ENCODE measurements at regions of chr4 and their contacts with region 1.

Region 1: GRCh38 chr4:99117876-99118693 is 26.0 kb downstream of the ADH4 start:
- DNase-seq: no peak
- H3K4me3 ChIP-seq: no peak overlapping the region
- H3K27ac ChIP-seq: no peak overlapping the region
- H3K27me3 ChIP-seq: no peaks in the 10 kb centered on the region
- CTCF ChIP-seq: peak; percentile 45; the same call in 1 of the 2 replicates

Region 2: DNA sequence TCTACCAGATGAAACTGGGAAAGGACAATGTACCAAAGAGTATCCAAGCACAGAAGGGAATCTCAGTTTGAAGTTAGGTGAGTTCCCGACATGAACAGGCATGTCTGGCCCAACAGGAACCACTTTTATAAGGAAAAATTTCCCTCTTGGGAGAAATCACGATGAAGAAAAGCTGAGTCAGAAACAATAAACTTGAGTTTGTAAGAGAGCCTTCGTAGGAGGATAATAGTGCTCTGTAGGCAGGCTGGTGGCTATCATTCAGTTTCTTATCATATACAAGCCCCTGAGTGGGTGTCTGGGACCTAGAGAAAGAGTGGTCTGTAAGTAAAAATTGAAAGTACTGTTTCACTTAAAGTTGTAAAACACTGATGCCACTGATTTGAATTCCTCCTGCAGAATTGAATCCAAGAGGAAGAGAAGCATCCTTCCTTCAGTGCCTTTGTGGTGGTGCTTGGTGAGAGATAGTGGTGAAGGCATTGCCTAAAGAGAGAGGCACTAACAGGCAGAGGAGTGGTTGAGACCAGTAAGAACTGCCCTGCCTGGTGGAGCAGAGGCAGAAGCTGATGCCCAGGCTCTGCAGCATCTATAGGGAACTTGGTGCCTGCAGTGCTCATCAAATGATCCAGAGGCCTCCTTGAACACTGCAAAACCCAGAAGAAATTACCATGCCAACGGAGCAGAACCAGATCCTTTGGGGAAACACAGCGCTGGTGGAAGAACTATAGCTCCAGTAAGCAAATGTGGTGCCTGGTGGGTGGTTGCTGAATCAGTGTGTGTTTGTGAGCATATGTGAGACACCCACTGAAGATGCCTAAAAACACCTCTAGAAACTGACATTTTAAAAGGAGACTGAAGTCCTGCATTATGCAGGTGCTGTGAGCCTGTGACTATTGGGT is 154.3 kb before region 1 on chr4:
- CTCF ChIA-PET with region 1: interaction called, 17 read pairs
- POLR2A ChIA-PET with region 1: no interaction called
- DNase-seq: no peak
- H3K4me3 ChIP-seq: no peak overlapping the region
- H3K27ac ChIP-seq: no peak overlapping the region
- H3K27me3 ChIP-seq: no peaks in the 10 kb centered on the region
- CTCF ChIP-seq: no peak

Region 3: GRCh38 chr4:99457270-99457669 is 339.2 kb after region 1 on chr4:
- CTCF ChIA-PET with region 1: interaction called, 35 read pairs
- POLR2A ChIA-PET with region 1: no interaction called
- DNase-seq: no peak
- H3K4me3 ChIP-seq: no peak overlapping the region
- H3K27ac ChIP-seq: no peak overlapping the region
- H3K27me3 ChIP-seq: peaks cover 2% of the 10 kb centered on the region
- CTCF ChIP-seq: peak; percentile 41

Measured in AG04450 (cell line).